Right ventricle myocardium inferior (tissue), 1 donor: ENCODE measurements at regions of chrX and their contacts with region 1.

Region 1: DNA sequence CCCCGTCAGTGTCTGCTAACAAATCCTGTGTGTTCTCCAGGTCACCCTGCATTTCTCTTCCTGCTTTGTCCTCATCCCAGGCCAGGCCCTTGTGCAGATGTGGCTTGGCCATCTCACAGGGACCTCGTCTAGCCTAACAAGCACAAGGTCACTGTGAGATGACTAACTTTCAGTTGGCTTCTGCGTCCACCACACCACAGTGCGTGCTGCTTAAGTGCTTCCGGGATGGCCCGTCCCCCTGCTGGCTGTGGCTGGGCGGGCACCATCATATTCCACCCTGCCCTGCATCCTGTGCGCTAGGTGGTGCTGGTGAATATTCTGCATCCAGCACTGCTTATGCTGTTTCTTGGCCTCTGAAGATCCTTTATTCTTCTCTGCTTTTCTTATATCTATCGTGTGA is 33.8 kb downstream of the RBBP7 start:
- DNase-seq: no peak
- ATAC-seq: no peak

Region 2: DNA sequence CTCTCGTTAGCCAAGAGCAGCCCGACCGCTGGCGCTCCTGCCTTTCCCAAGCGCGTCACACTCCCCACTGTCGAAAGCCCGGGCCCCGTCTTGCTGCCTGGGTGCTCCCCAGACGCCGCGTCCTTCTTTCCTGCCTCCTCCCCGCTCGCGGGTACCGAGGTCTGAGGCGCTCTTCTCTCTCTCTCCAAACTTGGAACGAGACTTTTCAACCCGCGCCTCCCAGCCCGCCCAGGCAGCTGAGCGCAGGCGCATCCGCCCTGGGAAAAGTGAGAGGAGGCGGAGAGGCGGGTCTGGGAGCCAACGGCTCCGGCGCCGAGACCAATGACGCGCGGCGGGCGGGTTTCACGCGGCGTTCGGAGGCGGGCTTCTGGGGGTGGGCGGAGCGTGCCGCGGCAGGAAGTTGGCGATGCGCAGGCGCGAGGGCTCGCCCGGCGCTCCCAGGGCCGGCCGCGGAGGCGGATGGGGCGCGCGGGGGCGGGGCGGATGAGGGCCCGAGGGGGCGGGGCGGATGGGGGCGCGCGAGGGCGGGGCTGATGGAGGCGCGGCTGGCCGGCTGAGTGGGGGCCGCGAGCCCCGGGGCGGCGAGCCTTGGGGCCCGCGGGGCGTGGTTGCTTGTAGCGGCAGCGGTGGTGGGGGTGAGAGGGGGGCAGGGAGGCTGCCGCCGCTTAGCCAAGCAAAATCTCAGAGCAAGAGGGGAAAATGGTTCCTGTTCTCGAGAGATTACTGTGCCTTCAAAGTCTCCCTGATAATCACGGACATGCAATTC is 33.9 kb after region 1 on chrX and contains the start of gene RBBP7:
- intact Hi-C with region 1: loop called (anchors 5 kb)
- DNase-seq: peak; percentile 95
- ATAC-seq: peak; percentile 97
- total RNA-seq, gene RBBP7: 108 TPM